Activated B cell treated with CpG ODN at 0.5 μM for 24 hours (primary cell): ENCODE measurements at regions of chr9 and their contacts with region 1.

Region 1: DNA sequence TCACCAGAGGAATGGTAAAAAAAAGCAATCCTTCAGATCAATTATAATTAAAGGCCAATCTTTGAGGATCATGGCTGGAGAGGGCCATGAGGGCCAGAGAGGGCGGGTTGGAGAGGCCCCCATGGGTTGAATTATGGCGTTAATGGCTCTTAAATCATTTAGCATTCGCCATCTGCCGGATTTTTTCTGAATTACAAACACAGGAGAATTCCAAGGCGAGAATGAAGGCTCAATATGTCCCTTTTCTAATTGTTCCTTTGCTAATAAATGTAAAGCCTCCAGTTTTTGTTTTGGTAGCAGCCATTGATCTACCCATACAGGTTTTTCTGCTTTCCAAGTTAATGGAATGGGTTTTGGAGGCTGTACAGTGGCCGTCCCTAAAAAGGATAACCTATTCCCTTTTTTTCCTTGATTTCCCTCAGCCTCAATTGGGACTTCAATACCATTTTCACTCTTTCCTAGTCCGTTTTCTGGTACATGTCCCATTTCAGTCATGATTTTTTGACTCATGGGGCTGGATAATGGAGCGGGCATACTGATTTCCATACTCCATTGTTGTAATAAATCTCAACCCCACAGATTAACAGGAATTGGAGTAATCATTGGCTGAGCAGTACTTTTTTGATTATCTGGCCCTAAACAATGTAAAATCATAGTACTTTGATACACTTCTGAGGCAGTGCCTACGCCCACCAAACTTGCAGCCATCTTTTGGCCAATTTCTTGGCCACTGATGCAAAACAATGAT is 6.7 kb upstream of the TMEM141 start:
- DNase-seq: no peak
- ATAC-seq: no peak
- H3K4me3 Mint-ChIP-seq: no peak overlapping the region
- H3K27ac Mint-ChIP-seq: no peak overlapping the region
- H3K4me1 Mint-ChIP-seq: peaks cover 15% of the 10 kb centered on the region
- H3K27me3 Mint-ChIP-seq: no peaks in the 10 kb centered on the region
- CTCF ChIP-seq: no peak

Region 2: GRCh38 chr9:136769710-136770191 is 14.7 kb before region 1 on chr9:
- CTCF ChIA-PET with region 1: interaction called, 4 read pairs
- POLR2A ChIA-PET with region 1: no interaction called
- intact Hi-C with region 1: loop called (anchors 1 kb)
- DNase-seq: no peak
- ATAC-seq: no peak
- H3K4me3 Mint-ChIP-seq: no peak overlapping the region
- H3K27ac Mint-ChIP-seq: no peak overlapping the region
- H3K4me1 Mint-ChIP-seq: peaks cover 40% of the 10 kb centered on the region
- H3K27me3 Mint-ChIP-seq: peaks cover 1% of the 10 kb centered on the region
- CTCF ChIP-seq: no peak